ENCODE measurements at regions of chr3 and their contacts with region 1.

Region 1: DNA sequence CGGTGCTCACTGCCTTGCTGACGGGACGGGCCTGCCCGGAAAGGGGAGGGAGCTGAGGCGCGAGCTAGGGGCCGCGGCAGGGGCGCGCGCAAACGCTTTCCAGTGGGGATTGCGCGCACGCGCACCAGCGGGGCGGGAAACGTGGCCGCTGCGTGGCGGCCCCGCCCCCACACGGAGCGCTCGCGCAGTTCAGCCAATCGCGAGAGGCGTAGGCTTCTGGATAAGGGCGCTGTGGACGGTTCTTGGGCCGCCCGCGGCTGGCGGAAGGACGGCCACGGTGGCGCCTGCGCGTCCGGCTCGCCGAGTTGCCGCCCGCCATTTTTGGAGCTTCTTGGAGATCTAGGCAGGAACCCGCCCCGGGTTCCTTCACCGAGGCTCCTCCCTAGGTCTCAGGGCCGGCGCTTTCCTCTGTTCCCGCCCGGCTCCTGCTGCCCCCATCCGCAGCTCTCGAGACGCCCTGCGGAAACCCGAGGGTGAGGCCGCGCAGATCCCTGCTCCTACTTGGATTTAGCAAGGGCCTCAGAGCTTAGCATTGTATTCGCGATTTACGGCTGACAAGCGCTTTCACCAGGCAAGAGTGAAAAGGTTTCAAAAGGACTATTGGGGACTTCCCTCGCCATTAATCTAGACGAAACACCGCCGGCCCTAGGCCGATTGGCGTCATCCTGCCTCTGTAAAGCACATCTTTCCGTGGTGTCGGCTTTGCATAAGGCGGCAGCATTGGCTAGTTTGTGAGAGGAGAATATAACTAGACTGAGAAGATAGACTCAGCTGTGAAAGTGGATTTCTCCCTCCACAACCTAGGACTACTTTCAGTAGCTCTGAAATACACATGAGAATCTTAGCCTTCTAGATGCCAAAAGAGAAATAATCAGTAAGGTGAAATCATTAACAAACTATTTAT is 496 bp upstream of the STAG1 start:
- DNase-seq: peak; percentile 96 to 99 (median 98)
- H3K4me3 ChIP-seq: peak overlapping the region; percentile 47 to 93 (median 78)
- H3K27ac ChIP-seq: peak overlapping the region; percentile 91 to 100 (median 99)
- H3K27me3 ChIP-seq: no peaks in the 10 kb centered on the region
- CTCF ChIP-seq: peak in 38 of 56 donors; percentile 3 to 100 (median 26)

Region 2: DNA sequence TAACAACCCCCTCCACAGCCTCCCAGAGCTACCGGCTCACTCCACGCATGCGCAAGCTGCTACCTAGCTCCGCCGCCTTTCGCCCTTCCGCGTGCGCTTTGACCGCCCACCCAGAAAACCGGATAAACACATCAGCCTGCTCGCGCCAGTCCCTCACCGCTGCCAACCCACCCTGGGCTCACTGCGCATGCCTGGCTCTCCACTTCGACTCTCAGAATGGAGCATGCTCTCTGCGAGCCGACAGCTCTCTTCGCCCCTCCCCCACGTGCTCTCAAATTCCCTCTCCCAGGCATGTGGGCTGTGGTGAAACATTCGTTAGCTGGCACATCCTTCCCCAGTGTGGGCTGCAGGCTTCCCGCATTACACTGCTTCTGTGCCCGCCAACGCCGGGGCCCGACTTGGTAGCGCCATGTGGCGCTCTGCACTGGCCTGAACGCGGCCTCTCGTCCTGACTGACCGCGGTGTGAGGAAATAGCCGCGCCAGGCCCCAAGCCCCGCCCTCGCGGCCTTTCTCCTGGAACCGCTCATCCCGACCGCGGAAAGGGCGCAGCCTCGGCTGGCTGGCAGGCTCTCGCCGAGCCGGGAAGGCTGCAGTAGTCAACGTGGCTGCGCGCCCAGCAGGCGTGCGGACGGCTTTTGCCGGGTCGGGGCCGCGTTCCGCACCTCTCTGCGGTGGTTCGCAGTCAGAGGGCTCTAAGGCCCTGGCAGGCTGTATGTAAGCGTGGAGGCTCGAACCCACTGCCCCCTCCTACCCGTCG is 556.1 kb before region 1 on chr3:
- intact Hi-C with region 1: loop called (anchors 1 to 2 kb)
- DNase-seq: peak; percentile 93 to 97 (median 95)
- H3K4me3 ChIP-seq: peak overlapping the region; percentile 66 to 98 (median 91)
- H3K27ac ChIP-seq: peak overlapping the region; percentile 91 to 100 (median 100)
- H3K27me3 ChIP-seq: no peaks in the 10 kb centered on the region
- CTCF ChIP-seq: peak in 17 of 56 donors; percentile 4 to 45 (median 19)

Region 3: GRCh38 chr3:136385457-136385856 is 367.2 kb before region 1 on chr3:
- intact Hi-C with region 1: loop called (anchors 2 to 5 kb)
- DNase-seq: no peak
- H3K4me3 ChIP-seq: no peak overlapping the region
- H3K27ac ChIP-seq: no peak overlapping the region
- H3K27me3 ChIP-seq: no peaks in the 10 kb centered on the region
- CTCF ChIP-seq: no peak

Region 4: GRCh38 chr3:136545664-136546268 is 206.9 kb before region 1 on chr3:
- intact Hi-C with region 1: loop called (anchors 1 kb)
- DNase-seq: no peak
- H3K4me3 ChIP-seq: peak overlapping the region in 1 of 59 donors; percentile 25
- H3K27ac ChIP-seq: peak overlapping the region in 47 of 59 donors; percentile 1 to 77 (median 55)
- H3K27me3 ChIP-seq: no peaks in the 10 kb centered on the region
- CTCF ChIP-seq: peak in 55 of 56 donors; percentile 6 to 87 (median 59)

Region 5: DNA sequence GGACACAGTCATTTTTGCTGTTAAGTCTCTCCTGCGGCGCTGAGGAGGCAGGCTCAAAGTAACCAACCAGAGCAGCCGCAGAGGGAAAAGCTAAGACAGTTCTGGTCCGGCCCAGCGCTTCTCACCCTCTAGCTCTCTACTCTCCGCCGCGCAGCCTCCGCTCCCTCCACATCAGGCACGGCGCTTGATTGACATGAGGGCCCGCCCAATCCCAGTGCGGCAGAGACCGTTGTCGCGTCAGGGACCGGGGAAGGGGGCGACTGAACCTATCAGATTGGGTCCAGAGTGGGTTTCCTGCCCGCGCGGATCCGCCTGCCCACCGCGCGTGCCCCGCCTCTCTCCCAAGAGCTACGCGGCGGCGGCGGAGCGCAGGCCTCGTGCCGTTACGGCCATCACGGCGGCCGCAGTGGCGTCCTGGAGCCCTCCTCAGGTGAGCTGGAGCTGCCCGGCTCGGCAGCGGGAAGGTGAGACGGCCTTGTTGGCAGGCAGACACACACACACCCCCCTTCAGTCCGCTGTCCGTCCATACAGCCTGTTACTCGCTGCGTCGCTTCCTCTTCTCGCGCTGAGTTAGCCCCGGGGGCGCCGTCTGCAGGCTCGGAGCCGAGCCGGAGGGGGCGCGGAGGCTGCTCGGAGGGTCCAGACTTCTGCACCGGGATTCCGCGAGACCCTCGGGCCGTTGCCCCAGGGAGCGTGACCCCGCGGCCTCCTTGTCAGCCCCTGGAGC is 109.4 kb after region 1 on chr3 and contains the start of gene NCK1:
- intact Hi-C with region 1: loop called (anchors 1 kb)
- DNase-seq: peak; percentile 99 to 100 (median 99)
- H3K4me3 ChIP-seq: peak within 1 kb of the TSS; percentile 66 to 98 (median 92)
- H3K27ac ChIP-seq: peak within 1 kb of the TSS in 58 of 59 donors; percentile 54 to 95 (median 88)
- H3K27me3 ChIP-seq: no peaks in the 10 kb centered on the region
- CTCF ChIP-seq: peak in 35 of 56 donors; percentile 4 to 58 (median 28)
- total RNA-seq, gene NCK1: 15.6 to 40.2 (median 26.0) TPM

Measured in dorsolateral prefrontal cortex (tissue), 120 donors.